MCF 10A (cell line): ENCODE measurements at regions of chr2 and their contacts with region 1.

Region 1: DNA sequence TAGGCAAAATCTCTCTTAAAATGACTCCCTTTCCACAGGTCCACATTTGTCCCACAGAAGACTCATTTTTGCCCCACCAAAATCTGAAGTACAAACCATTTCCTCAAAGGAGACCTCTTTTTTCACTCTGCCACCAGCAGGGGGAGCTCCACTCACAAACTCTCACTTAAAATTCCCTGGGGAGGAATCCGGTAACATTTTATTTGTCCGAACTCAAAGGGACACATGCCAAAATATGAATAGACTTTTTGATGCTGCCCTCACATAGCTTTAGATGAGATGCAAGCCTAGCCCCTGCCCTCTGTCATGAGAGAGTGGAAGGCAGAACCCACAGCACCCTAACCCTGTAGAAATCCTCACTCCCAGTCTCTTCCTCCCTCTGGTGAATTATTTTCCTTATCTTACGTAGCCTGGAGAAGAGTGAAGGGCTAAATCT is 57.1 kb downstream of the RMDN2 start:
- DNase-seq: peak; percentile 79
- H3K4me3 Mint-ChIP-seq: no peak overlapping the region
- H3K27ac Mint-ChIP-seq: no peak overlapping the region
- H3K4me1 Mint-ChIP-seq: peaks cover 14% of the 10 kb centered on the region
- H3K27me3 Mint-ChIP-seq: no peaks in the 10 kb centered on the region
- CTCF ChIP-seq: peak; percentile 88

Region 2: DNA sequence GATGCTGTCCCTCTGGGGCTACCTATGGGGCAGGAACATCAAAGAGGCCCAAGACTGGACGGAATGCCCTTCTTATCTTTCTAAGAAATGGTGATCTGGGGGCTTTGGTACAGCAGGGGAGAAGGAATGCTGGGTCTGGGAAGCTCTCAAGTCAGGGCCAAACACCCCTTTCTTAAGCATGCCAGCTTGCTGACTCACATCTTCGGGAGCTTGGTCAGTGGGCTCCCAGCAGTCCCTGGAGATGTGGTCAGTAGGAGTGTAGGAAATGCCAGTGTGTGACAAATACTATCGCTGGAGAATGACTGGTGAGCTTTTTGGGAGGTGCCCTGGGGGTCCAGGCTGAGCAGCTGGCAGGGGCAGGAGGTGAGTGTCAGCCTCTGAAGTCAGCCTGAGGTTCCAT is 205.7 kb before region 1 on chr2:
- CTCF ChIA-PET with region 1: no interaction called
- POLR2A ChIA-PET with region 1: no interaction called
- intact Hi-C with region 1: no loop called
- DNase-seq: peak; percentile 79
- H3K4me3 Mint-ChIP-seq: no peak overlapping the region
- H3K27ac Mint-ChIP-seq: peak overlapping the region; percentile 64
- H3K4me1 Mint-ChIP-seq: peaks cover 45% of the 10 kb centered on the region
- H3K27me3 Mint-ChIP-seq: no peaks in the 10 kb centered on the region
- CTCF ChIP-seq: no peak

Region 3: GRCh38 chr2:37896314-37896713 is 85.9 kb before region 1 on chr2:
- CTCF ChIA-PET with region 1: interaction called, 4 read pairs
- POLR2A ChIA-PET with region 1: no interaction called
- intact Hi-C with region 1: loop called (anchors 2 kb)
- DNase-seq: no peak
- H3K4me3 Mint-ChIP-seq: no peak overlapping the region
- H3K27ac Mint-ChIP-seq: no peak overlapping the region
- H3K4me1 Mint-ChIP-seq: peaks cover 14% of the 10 kb centered on the region
- H3K27me3 Mint-ChIP-seq: no peaks in the 10 kb centered on the region
- CTCF ChIP-seq: no peak

Region 4: DNA sequence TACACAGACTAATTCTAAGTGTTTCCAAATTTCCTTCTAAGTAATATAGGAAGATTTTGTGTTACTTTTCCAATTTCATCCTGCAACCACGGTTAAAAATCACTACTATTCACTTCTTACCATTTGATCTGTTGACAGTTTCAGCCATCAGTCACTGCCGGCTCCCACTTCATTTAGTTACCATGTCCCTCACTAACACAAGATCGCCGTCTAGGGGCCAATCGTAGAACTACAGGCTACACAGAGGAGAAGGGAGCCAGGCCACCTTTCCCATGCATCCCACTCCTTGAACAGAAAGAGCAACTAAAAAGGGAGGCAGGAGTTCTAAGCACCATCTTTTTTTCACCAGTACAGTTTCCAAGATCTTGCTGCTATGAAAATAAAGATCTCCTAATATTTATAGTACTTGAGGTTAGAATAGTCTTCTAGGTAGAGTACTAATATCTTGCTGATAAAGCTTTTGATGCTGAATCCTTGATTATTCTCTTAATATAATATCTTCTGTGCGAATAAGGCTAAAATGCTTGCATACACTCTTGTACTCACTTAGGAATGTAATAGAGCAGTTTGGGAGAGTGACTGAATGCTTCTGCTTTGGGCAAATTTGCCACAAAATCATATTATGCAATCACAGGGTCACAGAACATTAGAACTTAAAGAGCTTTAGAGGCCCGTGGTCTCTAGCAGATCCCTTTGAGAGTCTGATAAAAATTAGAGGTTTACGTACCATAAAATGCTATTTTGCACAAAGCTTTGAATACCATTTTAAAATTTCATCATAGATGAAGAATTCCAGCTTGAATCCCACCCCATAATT is 133.3 kb after region 1 on chr2:
- CTCF ChIA-PET with region 1: interaction called, 9 read pairs
- POLR2A ChIA-PET with region 1: no interaction called
- intact Hi-C with region 1: loop called (anchors 1 kb)
- DNase-seq: peak; percentile 94
- H3K4me3 Mint-ChIP-seq: no peak overlapping the region
- H3K27ac Mint-ChIP-seq: no peak overlapping the region
- H3K4me1 Mint-ChIP-seq: peaks cover 28% of the 10 kb centered on the region
- H3K27me3 Mint-ChIP-seq: no peaks in the 10 kb centered on the region
- CTCF ChIP-seq: peak; percentile 96